Head of caudate nucleus (tissue), 42 donors: ENCODE measurements at regions of chr3 and their contacts with region 1.

Region 1: GRCh38 chr3:131782751-131783150 is 252.1 kb downstream of the CPNE4 start:
- DNase-seq: no peak

Region 2: DNA sequence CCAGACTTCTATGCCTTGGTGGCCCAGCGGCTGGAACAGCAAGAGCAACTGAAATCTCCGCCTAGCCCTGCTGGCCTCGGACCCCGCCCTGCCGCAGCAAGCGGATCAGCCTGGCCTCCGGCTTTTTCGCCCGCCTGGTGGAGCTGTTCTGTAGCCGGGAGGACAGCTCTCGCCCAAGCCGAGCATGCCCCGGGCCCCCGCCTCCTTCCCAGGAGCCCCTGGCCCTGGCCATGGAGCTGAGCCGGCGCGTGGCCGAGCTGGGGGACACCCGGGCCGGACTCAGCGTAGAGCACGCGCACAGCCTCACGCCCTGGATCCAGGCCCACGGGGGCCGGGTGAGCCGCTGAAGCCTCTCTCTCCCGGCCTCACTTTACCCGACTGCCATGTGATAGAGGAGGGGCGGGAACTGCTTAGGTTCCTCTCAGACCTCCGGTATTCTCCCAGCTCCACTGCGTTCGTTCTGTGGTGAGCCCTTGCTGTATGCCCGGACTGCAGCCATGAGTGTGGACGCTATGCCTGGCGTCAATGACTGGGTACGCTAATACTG is 255.9 kb before region 1 on chr3:
- intact Hi-C with region 1: no loop called
- DNase-seq: peak in 34 of 42 donors; percentile 4 to 58 (median 28)

Region 3: DNA sequence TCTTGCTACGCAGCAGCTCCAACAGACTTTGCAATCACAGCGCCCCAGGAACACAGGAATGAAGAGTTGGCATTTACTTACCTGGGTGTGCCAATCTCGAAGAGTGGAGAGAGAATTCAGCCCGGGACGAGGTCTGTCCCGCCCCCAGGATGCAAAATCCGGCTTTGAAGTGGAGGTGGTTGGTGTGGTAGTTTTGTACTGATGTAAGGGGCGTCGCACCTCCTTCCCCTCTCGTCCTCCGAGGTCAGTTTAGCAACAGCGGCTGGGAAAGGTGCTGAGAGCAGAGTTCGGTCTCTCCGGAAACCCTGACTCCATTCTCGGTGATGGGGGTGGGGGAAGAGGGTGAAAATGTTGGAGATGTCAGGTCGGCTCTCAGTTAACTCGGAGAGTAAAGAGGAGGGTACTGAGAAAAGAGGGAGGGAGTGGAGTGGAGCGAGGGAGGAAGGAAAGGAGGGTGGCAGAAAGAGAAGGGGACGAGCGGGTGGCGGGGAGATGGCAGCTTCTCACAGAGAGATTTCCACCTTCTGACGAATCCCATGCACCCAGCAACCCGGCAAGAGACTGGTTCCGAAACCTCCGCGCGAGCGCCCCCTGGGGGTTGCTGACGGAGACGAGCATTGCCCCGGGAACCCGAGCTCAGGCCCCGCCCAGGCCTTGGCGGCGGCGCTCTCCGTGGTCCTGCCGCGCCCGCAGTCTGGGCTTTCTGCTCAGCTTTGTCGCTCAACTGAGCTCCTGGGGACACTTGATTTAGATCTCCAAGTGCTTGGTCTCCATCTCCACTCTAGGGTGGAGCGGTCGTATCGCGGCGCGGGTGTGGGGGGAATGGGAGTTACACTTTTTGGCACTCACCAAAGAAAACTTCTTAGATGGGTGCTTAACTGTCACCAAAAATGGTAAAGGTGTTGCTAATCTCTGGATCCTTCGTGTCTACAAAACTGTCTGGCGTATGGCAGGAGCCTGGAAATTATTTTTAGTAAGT is 252.0 kb after region 1 on chr3 and contains the start of gene CPNE4:
- intact Hi-C with region 1: loop called (anchors 10 kb)
- DNase-seq: peak; percentile 54 to 94 (median 86)

Region 4: GRCh38 chr3:132047209-132047608 is 264.5 kb after region 1 on chr3:
- intact Hi-C with region 1: no loop called
- DNase-seq: no peak

Region 5: GRCh38 chr3:132549890-132550578 is 767.3 kb after region 1 on chr3:
- intact Hi-C with region 1: no loop called
- DNase-seq: no peak